Activated T-helper 2 cell treated with anti-CD3 and anti-CD28 coated beads, Interferon-gamma antibody, Interleukin-2, Interleukin-4, amounts not matched to agents 10 μg/mL and 5 μg/mL and 100 μg/mL, durations not matched to agents 14 hours and 24 hours and 36 hours (primary cell): ENCODE measurements at regions of chr16 and their contacts with region 1.

Region 1: DNA sequence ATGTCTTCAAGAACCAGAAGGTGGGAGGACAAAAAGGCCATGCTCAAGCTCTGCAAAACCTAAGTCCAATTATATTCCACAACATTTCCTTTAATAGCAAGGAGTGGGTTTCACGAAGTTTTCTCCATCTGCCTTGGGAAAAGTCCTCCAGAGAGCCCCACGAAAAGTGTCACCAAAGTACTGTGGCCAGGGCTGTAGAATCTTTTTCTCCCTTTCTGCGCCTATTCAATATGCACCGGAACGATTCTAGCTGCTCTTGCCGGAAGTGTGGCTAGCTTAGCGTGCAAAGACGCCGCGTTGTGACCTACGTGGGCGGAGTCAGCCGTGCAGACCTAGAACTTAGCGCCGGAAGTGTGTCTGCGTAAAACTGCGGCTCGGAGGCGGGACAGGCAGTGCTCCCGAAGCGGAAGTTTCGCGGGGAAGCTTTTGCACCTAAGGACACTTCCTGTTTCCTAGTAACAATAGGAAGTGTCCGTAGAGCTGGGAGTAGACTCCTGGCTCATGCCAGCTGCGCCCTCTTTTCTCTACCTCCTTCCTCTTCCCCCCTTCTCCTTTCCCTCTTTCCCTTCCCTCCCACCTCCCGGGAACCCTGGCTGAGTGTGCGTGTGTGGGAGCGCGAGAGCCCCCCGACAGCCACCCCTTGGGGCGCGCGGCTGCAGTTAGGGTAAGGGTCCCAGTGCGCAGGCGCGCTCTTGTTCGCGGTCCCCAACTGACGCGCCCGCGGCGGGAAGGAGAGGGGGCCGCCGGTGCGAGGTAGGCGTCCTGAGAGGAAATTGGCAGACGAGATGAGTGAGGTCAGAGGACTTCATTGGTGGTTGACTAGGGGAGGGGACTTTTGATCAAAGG is at the starts of genes ZNF646 and ZNF668:
- DNase-seq: peak; percentile 98
- H3K4me3 Mint-ChIP-seq: peak within 1 kb of the TSS; percentile 99
- H3K27ac Mint-ChIP-seq: peak within 1 kb of the TSS; percentile 96
- H3K4me1 Mint-ChIP-seq: peaks cover 23% of the 10 kb centered on the region
- H3K27me3 Mint-ChIP-seq: no peaks in the 10 kb centered on the region
- total RNA-seq, gene ZNF646: 24.4 and 24.5 TPM in 2 replicates
- total RNA-seq, gene ZNF668: 12.7 and 13.2 TPM in 2 replicates

Region 2: GRCh38 chr16:30957456-30958174 is 116.6 kb before region 1 on chr16 and contains the start of gene SETD1A:
- intact Hi-C with region 1: loop called (anchors 1 kb)
- DNase-seq: peak; percentile 94
- H3K4me3 Mint-ChIP-seq: peak within 1 kb of the TSS; percentile 95
- H3K27ac Mint-ChIP-seq: peak within 1 kb of the TSS; percentile 99
- H3K4me1 Mint-ChIP-seq: peaks cover 26% of the 10 kb centered on the region
- H3K27me3 Mint-ChIP-seq: no peaks in the 10 kb centered on the region
- total RNA-seq, gene SETD1A: 28.9 TPM in 2 replicates

Region 3: DNA sequence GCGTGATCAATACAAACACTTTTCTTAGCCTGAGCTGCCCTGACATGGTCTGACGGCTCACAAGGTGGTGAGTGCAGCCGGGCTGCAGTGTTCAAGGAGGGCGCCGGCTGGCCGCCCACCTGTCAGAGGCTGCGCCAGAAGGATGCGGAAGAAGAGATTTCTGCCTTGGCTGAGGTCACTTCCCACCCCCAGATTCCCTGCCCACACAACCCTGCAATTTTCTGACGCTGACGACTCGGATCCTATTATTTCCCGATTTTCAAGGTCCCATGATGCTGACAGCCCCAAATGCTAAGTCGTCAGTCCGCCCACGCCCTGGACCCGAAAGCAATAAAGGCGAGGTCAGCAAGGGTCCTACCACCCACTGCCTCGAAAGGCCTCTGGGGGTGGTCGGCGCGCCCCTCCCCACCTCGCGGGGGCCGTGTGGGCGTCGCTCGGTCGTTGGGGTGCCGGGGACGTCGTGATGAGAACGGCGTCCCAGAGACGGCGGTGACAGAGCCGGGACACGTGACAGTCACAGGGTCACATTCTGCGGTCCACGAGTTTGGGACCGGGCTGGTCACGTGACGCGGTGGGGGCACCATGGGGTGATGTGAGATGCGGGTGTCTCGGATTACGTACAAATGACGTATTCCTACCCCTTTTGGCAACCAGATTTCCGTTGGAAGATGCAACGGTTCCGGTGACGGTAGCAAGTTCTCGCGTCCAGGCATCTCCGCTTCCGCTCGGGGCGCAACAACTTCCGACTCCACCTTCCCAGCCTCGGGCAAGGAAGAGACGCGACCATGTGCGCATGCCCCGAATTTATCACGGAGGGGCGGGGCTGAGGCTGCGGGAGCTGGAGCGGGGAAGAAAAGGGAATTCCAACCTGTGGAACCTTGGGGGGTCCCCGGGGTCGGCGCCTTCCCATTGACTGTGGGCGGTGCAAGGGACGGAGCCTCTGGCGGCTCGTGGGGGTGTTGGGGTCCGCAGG is 41.2 kb before region 1 on chr16 and contains the start of gene STX4:
- intact Hi-C with region 1: loop called (anchors 1 kb)
- DNase-seq: peak; percentile 97
- H3K4me3 Mint-ChIP-seq: peak within 1 kb of the TSS; percentile 87
- H3K27ac Mint-ChIP-seq: peak within 1 kb of the TSS; percentile 89
- H3K4me1 Mint-ChIP-seq: peaks cover 16% of the 10 kb centered on the region
- H3K27me3 Mint-ChIP-seq: no peaks in the 10 kb centered on the region
- total RNA-seq, gene STX4: 48.2 and 51.8 TPM in 2 replicates

Region 4: DNA sequence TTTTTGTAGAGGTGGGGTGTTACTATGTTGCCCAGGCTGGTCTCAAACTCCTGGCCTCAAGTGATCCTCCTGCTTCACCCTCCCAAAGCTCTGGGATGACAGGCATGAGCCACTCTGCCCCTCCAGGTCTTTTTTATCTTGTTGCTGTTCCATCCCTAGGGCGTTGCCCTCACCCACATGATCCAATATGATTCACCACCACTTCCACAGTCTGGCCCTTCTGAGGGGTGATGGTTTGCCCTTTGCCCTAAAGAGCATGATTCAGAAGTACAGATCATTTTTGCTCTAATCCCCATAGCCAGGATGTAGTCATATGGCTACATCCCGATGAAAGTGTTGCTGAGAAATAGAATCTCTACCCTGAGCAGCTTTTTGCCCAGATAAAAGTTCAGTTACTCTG is 22.1 kb before region 1 on chr16:
- intact Hi-C with region 1: no loop called
- DNase-seq: no peak
- H3K4me3 Mint-ChIP-seq: no peak overlapping the region
- H3K27ac Mint-ChIP-seq: no peak overlapping the region
- H3K4me1 Mint-ChIP-seq: peaks cover 9% of the 10 kb centered on the region
- H3K27me3 Mint-ChIP-seq: no peaks in the 10 kb centered on the region

Region 5: DNA sequence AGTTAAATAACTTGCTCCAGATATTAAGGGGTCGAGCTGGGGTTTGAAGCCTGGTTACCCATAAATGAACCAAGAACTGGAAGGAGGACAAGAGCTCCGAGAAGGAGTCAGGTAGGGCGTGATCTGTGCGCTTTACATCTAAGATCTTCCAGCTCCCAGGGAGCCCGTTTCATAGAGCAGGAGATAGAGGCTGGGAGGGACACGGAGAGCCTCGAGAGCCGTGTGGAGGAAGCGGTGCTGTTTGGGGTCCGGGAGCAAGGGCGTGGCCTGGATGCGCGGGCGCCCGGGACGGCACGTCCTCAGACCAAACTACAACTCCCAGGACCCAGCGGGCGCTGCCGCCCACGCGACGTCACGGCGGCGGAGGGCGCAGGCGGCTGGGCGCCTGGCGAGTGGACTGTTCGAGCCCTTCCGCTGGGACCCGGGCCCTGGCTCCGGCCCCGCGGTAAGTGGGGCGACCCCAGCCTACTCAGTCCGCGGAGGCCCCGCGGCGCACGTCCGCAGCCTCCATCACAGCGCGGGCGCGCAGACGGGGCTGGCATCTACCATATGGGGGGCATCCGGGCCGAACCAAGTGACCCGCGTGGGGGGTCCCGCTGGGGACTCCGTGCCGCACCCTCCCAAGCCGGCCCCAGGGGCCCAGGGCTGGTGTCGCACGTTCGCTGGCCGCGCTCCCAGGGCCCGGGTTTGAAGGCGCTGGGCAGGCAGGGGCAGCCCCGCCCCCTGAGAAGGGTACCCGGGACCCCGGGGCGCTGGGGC is 34.0 kb after region 1 on chr16 and contains the start of gene BCKDK:
- intact Hi-C with region 1: loop called (anchors 5 kb)
- DNase-seq: peak; percentile 65
- H3K4me3 Mint-ChIP-seq: peak within 1 kb of the TSS; percentile 85
- H3K27ac Mint-ChIP-seq: peak within 1 kb of the TSS; percentile 91
- H3K4me1 Mint-ChIP-seq: peaks cover 18% of the 10 kb centered on the region
- H3K27me3 Mint-ChIP-seq: no peaks in the 10 kb centered on the region
- total RNA-seq, gene BCKDK: 47.5 and 50.0 TPM in 2 replicates

Region 6: GRCh38 chr16:31179747-31180459 is 105.7 kb after region 1 on chr16 and contains the start of gene FUS:
- intact Hi-C with region 1: loop called (anchors 1 kb)
- DNase-seq: peak; percentile 88
- H3K4me3 Mint-ChIP-seq: peak within 1 kb of the TSS; percentile 98
- H3K27ac Mint-ChIP-seq: peak within 1 kb of the TSS; percentile 95
- H3K4me1 Mint-ChIP-seq: peaks cover 38% of the 10 kb centered on the region
- H3K27me3 Mint-ChIP-seq: no peaks in the 10 kb centered on the region
- total RNA-seq, gene FUS: 874 and 904 TPM in 2 replicates